ENCODE measurements at regions of chr4 and their contacts with region 1.

Region 1: DNA sequence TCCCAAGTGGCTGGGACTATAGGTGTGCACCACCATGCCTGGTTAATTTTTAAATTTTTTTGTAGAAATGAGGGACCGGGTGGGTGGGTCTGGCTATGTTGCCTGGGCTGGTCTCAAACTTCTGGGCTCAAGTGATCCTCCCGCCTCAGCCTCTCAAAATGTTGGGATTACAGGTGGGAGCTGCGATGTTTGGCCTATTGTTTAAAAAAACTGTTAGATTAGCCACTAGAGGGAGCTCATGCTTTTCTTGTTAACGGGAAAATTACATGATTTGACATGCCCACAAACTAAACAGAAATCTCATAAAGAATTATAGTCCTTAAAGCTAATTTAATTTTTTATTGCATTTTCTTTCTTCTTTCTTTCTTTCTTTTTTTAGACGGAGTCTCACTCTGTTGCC is 5.0 kb upstream of the SDAD1 start:
- DNase-seq: no peak
- H3K4me3 ChIP-seq: no peak overlapping the region
- H3K27ac ChIP-seq: no peak overlapping the region
- H3K27me3 ChIP-seq: no peaks in the 10 kb centered on the region
- CTCF ChIP-seq: peak; percentile 63

Region 2: GRCh38 chr4:76013540-76013939 is 17.8 kb after region 1 on chr4:
- CTCF ChIA-PET with region 1: interaction called, 20 read pairs
- POLR2A ChIA-PET with region 1: interaction called, 3 read pairs
- DNase-seq: no peak
- H3K4me3 ChIP-seq: no peak overlapping the region
- H3K27ac ChIP-seq: no peak overlapping the region
- H3K27me3 ChIP-seq: no peaks in the 10 kb centered on the region
- CTCF ChIP-seq: no peak

Region 3: GRCh38 chr4:76061982-76062381 is 66.3 kb after region 1 on chr4:
- CTCF ChIA-PET with region 1: interaction called, 163 read pairs
- POLR2A ChIA-PET with region 1: interaction called, 3 read pairs
- DNase-seq: no peak
- H3K4me3 ChIP-seq: no peak overlapping the region
- H3K27ac ChIP-seq: no peak overlapping the region
- H3K27me3 ChIP-seq: no peaks in the 10 kb centered on the region
- CTCF ChIP-seq: no peak

Region 4: DNA sequence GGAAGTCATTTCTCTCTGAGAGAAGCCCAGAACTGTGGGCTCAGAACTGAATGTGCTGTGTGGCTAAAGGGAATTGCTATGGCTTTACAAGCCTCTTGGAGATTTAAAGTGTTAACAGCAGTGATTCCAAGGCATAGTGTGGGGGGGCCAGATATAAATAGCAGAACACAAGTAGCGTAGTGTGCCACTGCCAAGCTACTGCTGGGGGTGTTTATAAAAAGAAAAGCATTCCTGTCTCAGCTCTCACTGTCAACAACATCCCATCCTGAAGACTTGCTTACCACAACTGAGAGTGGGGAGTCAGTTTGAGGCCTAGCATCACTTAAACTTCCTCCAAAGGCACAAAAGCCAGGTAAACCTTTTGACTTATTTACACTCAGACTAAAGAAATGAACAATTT is 78.7 kb after region 1 on chr4 and contains the start of gene ART3:
- CTCF ChIA-PET with region 1: interaction called, 163 read pairs
- POLR2A ChIA-PET with region 1: no interaction called
- DNase-seq: no peak
- H3K4me3 ChIP-seq: no peak within 1 kb of the TSS
- H3K27ac ChIP-seq: no peak within 1 kb of the TSS
- H3K27me3 ChIP-seq: peaks cover 5% of the 10 kb centered on the region
- CTCF ChIP-seq: no peak
- polyA plus RNA-seq, gene ART3: 0.20 TPM in 1 of 2 replicates, not detected in the other

Region 5: DNA sequence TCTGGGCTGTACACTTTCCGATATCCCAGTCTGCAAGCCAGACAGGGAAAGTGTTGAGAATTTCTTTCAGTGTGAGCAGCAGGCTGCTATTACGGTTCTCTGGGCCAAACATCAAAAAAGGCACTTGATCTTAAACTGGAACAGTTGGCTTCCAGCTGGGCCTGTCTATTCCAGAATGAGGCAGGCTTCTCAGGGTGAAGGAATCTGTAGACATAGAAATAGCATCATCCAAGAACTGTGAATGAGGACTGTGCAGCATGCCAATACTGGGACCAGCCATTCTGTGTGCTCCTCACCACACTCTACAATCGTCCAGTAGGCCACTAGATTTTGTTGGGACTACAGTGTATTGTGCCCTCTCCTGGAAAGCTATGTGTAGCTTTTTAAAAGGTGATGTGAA is 109.9 kb after region 1 on chr4:
- CTCF ChIA-PET with region 1: interaction called, 13 read pairs
- POLR2A ChIA-PET with region 1: no interaction called
- DNase-seq: no peak
- H3K4me3 ChIP-seq: no peak overlapping the region
- H3K27ac ChIP-seq: no peak overlapping the region
- H3K27me3 ChIP-seq: peaks cover 24% of the 10 kb centered on the region
- CTCF ChIP-seq: no peak

Region 6: DNA sequence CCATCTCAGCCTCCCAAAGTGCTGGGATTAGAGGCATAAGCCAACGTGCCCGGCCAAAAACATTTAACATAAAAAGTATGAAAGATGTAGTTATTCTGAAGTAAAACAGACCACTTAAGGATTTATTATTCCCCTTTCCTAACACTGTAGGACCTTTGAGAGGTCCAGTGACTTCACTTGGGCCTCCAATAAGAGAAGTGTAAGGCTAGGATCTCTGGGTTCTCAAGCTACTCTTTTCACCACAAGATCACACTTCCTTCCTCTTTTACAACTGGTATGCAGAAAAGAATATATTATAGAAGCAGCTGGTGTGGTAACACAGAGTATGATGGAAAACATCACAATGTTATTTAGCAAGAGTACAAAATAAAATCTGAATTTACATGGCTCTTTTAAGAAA is 1131.1 kb after region 1 on chr4:
- CTCF ChIA-PET with region 1: no interaction called
- POLR2A ChIA-PET with region 1: no interaction called
- DNase-seq: no peak
- H3K4me3 ChIP-seq: no peak overlapping the region
- H3K27ac ChIP-seq: no peak overlapping the region
- H3K27me3 ChIP-seq: peaks cover 23% of the 10 kb centered on the region
- CTCF ChIP-seq: no peak

Measured in AG04450 (cell line).